HCT116 (cell line): ENCODE measurements at regions of chr3 and their contacts with region 1.

Region 1: DNA sequence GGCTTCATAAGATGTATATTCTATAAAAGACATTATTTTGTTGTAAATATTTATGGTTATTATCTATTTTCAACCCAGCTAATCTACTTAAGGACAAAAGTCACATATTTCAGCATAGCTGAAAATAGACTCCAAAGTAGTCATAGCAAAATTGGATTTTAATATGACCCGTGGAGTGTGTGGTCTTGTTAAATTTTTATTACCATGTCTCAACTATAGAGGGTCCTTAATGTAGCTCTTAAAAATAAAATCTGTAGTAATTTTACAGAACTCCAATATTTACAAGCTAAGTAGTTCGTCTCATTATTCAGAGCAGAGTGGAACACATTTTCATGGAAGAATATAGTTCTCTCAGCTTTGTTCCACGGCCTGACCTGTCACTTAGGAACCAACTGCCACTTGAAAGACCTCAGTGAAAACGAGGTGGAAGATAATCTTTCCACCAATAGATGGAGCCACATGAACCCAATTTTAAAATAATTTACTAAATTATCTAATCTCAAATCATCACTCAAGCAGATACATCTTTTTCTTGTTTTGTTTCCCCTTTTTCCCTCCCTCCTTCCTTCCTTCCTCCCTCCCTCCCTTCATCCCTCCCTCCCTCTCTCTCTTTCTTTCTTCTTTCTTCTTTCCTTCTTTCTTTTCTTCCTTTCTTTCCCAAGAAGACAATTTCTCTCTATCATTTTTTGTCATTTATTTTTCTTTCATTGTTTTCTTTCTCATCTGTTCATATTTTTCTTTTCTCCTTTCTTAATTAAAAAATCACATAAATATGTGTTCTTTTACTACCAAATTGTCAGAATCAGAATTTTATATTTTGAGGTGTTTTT is 97.2 kb downstream of the CLDN1 start:
- DNase-seq: peak; percentile 10
- ATAC-seq: peak; percentile 72
- H3K4me3 ChIP-seq: no peak overlapping the region
- H3K27ac ChIP-seq: no peak overlapping the region
- H3K4me1 ChIP-seq: peaks cover 0 to 2% of the 10 kb centered on the region in 2 experiments; a peak in 1 of 4 replicates
- H3K27me3 ChIP-seq: no peaks in the 10 kb centered on the region
- CTCF ChIP-seq: peak; percentile 31 to 55 (median 52); a peak in 3 of 6 replicates
- POLR2A ChIP-seq: no peak
- RAD21 ChIP-seq: peak; percentile 71

Region 2: DNA sequence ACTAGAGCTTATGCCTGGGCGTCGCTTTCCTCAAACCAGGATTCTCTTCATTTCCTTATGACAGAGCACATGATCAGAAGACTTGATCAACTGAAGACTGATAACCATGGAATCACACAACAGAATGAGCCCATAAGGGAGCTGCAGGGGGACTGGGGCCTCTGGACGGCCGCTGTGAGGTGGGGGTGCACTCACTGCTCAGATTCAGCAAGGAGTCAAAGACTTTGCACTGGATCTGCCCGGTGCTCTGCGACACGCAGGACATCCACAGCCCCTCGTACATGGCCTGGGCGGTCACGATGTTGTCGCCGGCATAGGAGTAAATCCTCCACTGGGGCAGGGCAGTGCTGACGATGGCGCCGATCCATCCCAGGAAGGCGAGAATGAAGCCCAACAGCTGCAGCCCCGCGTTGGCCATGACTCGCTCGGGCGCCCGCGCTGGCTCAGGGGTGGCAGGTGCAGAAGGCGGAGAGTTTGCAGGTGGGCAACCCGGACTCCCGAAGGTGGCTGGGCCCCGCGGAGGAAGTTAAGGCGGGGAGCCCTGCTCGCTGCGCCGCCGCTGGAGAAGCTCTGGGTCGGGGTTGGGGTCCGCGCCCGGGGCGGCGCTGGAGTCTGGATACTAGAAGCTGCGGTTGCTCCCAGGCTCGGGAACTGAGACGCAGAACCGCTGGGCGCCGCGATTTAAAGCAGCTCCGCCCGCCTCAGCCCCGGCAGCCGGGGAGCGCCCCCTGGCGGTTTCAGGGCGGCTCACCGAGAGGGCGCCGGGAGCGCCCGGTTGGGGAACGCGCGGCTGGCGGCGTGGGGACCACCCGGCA is 96.9 kb after region 1 on chr3 and contains the start of gene CLDN1:
- CTCF ChIA-PET with region 1: interaction called, 18 read pairs
- POLR2A ChIA-PET with region 1: no interaction called
- RAD21 ChIA-PET with region 1: interaction called in 1 of 2 experiments, 3 read pairs
- intact Hi-C with region 1: loop called (anchors 1 kb)
- DNase-seq: peak; percentile 24
- ATAC-seq: peak; percentile 97
- H3K4me3 ChIP-seq: peak within 1 kb of the TSS; percentile 25 to 34
- H3K27ac ChIP-seq: no peak within 1 kb of the TSS
- H3K4me1 ChIP-seq: peaks cover 0 to 10% of the 10 kb centered on the region in 2 experiments; a peak in 1 of 4 replicates
- H3K27me3 ChIP-seq: no peaks in the 10 kb centered on the region; the same call in 1 of the 2 replicates
- CTCF ChIP-seq: peak; percentile 79 to 92 (median 84)
- POLR2A ChIP-seq: no peak
- RAD21 ChIP-seq: peak; percentile 85
- total RNA-seq, gene CLDN1: 0.20 TPM

Region 3: GRCh38 chr3:190424478-190425439 is 199.7 kb after region 1 on chr3:
- CTCF ChIA-PET with region 1: interaction called, 6 read pairs
- POLR2A ChIA-PET with region 1: no interaction called
- RAD21 ChIA-PET with region 1: no interaction called
- intact Hi-C with region 1: loop called (anchors 5 kb)
- DNase-seq: peak; percentile 78
- ATAC-seq: peak; percentile 91
- H3K4me3 ChIP-seq: peak overlapping the region in 1 of 2 experiments; percentile 17; a peak in 2 of 4 replicates
- H3K27ac ChIP-seq: no peak overlapping the region
- H3K4me1 ChIP-seq: peaks cover 0 to 6% of the 10 kb centered on the region in 2 experiments; a peak in 1 of 4 replicates
- H3K27me3 ChIP-seq: no peaks in the 10 kb centered on the region
- CTCF ChIP-seq: peak; percentile 63 to 81 (median 69)
- POLR2A ChIP-seq: no peak
- RAD21 ChIP-seq: peak; percentile 74

Region 4: GRCh38 chr3:190701096-190701532 is 476.0 kb after region 1 on chr3:
- CTCF ChIA-PET with region 1: interaction called, 6 read pairs
- POLR2A ChIA-PET with region 1: no interaction called
- RAD21 ChIA-PET with region 1: no interaction called
- intact Hi-C with region 1: loop called (anchors 10 kb)
- DNase-seq: peak; percentile 51
- ATAC-seq: peak; percentile 94
- H3K4me3 ChIP-seq: no peak overlapping the region
- H3K27ac ChIP-seq: no peak overlapping the region
- H3K4me1 ChIP-seq: peaks cover 0 to 3% of the 10 kb centered on the region in 2 experiments; a peak in 1 of 4 replicates
- H3K27me3 ChIP-seq: no peaks in the 10 kb centered on the region
- CTCF ChIP-seq: peak; percentile 62 to 77 (median 68); a peak in 5 of 6 replicates
- POLR2A ChIP-seq: no peak
- RAD21 ChIP-seq: peak; percentile 85